ENCODE measurements at regions of chr14 and their contacts with region 1.

Region 1: GRCh38 chr14:58395812-58396788 is at the start of gene TOMM20L:
- DNase-seq: peak; percentile 90
- CTCF ChIP-seq: peak; percentile 86

Region 2: DNA sequence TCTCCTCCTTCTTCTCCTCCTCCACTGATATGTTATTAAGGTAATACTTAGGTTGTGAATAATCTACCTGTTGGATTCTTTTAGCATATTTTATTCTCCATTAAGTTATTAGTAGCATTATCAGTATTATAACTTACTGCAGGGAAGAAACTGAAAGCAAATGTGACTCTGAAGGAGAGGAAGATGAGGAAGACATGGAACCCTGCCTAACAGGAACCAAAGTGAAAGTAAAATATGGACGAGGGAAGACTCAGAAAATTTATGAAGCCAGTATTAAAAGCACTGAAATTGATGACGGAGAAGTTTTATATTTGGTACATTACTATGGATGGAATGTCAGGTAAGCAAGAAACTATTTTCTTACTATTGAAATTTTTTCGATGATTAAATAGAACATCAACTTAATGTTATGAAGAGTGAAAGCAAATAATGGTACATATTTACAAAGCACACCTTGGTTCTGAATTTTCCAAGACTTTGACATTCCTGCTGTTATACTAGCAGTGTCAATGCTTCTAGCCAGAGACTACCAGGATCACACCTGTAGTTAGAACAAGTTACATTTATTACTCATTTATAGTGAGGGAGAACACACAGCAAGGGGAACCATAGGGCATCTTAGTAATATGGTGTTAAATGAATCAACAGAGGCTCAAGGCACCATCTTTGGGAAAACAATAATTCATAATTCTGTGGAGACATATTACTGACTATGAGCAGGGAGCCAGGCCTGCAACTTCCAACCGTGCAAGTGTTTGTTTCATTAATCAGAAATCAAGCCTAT is 42.4 kb before region 1 on chr14:
- CTCF ChIA-PET with region 1: interaction called, 12 read pairs
- POLR2A ChIA-PET with region 1: no interaction called
- DNase-seq: peak; percentile 13
- CTCF ChIP-seq: no peak

Region 3: DNA sequence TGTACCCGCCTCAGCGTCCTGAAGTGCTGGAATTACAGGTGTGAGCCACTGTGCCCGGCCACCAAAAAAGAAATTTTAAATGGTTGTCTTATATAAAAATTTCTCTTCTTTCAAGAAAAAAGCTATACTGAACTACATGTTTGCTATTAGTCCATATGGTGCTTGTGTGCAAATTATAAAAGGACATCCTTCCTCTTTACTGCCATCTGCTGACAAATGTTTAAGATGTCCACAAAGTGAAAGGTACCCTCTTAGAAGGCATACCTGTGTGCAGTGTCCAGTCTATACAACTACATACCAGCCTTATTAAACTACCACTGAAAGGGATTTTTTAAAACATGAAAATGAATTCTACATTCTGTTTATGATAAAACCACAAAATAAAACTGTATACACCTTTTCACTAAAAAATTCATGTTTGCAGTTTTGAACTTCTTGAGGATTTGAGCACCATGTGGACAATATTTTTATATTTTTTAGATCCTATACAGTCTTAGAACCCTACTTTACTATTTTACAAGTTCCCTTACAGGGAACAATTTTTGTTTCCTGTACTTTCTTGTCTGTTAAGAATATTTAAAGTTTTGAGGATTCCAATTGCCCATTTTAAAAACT is 33.2 kb before region 1 on chr14:
- CTCF ChIA-PET with region 1: interaction called, 12 read pairs
- POLR2A ChIA-PET with region 1: no interaction called
- DNase-seq: peak; percentile 25
- CTCF ChIP-seq: peak; percentile 14

Region 4: DNA sequence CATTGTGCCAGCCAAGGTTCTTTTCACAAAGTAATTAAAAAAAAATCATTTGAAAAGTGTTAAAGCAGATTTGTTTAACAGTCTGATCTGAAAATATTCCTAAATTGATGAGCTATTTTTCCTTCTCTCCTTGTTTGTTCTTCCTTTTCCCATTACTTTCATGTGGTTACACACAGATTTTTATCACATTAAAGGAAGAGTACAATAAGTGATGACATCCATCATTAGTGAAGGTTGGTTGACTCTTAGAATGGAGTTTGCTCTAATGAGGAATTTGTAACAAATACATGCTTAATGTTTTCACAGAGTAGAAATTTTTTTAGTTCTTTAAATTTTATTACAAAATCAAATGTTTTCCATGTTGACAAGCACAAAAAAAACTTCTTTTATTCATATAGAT is 19.3 kb before region 1 on chr14:
- CTCF ChIA-PET with region 1: interaction called, 25 read pairs
- POLR2A ChIA-PET with region 1: no interaction called
- DNase-seq: no peak
- CTCF ChIP-seq: no peak

Region 5: GRCh38 chr14:58408681-58409215 is 12.6 kb after region 1 on chr14:
- CTCF ChIA-PET with region 1: interaction called, 27 read pairs
- POLR2A ChIA-PET with region 1: interaction called, 4 read pairs
- DNase-seq: no peak
- CTCF ChIP-seq: no peak

Region 6: DNA sequence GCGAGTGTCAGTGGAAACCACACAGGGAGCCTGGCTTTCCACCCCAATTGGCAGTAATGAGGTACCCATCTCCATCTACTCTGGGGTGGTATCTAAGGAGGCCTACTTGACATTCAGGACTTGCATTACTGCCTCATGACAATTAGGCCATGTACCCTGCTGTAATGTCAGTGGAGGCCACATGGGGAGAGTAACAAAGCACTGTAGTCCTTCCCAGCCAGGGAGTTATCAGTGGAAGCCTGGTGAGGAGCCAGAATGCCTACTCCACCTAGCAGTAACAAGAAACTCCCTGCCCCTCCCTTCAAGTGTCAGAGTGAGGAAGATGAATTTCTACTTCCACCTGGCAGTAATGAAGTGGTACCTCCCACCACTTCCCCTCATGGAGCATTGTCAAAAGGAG is 18.7 kb after region 1 on chr14:
- CTCF ChIA-PET with region 1: interaction called, 19 read pairs
- POLR2A ChIA-PET with region 1: interaction called, 4 read pairs
- DNase-seq: no peak
- CTCF ChIP-seq: no peak

Region 7: GRCh38 chr14:58426670-58427280 is 30.7 kb after region 1 on chr14:
- CTCF ChIA-PET with region 1: interaction called, 33 read pairs
- POLR2A ChIA-PET with region 1: no interaction called
- DNase-seq: peak; percentile 62
- CTCF ChIP-seq: no peak